ENCODE measurements at regions of chr17 and their contacts with region 1.

Region 1: GRCh38 chr17:74757931-74758847 is 9.8 kb downstream of the NHERF1 start:
- DNase-seq: peak; percentile 33
- H3K4me3 ChIP-seq: no peak overlapping the region
- H3K27ac ChIP-seq: peak overlapping the region; percentile 43 to 65 (median 46)
- H3K4me1 ChIP-seq: peaks cover 42 to 75% (median 55%) of the 10 kb centered on the region in 4 donors
- H3K27me3 ChIP-seq: no peaks in the 10 kb centered on the region
- CTCF ChIP-seq: no peak
- EP300 ChIP-seq: no peak
- POLR2A ChIP-seq: no peak

Region 2: GRCh38 chr17:74784125-74784810 is 26.1 kb after region 1 on chr17:
- in situ Hi-C with region 1: no loop called
- intact Hi-C with region 1: loop called (anchors 1 kb)
- DNase-seq: no peak
- H3K4me3 ChIP-seq: no peak overlapping the region
- H3K27ac ChIP-seq: no peak overlapping the region
- H3K4me1 ChIP-seq: peaks cover 0 to 10% (median 0%) of the 10 kb centered on the region in 4 donors
- H3K27me3 ChIP-seq: no peaks in the 10 kb centered on the region
- CTCF ChIP-seq: no peak
- EP300 ChIP-seq: no peak
- POLR2A ChIP-seq: no peak

Region 3: GRCh38 chr17:74825952-74826719 is 67.9 kb after region 1 on chr17:
- in situ Hi-C with region 1: no loop called
- intact Hi-C with region 1: no loop called
- DNase-seq: no peak
- H3K4me3 ChIP-seq: no peak overlapping the region
- H3K27ac ChIP-seq: no peak overlapping the region
- H3K4me1 ChIP-seq: no peaks in the 10 kb centered on the region
- H3K27me3 ChIP-seq: no peaks in the 10 kb centered on the region
- CTCF ChIP-seq: no peak
- EP300 ChIP-seq: no peak
- POLR2A ChIP-seq: no peak

Measured in transverse colon (tissue), 4 donors.